ENCODE measurements at regions of chr22 and their contacts with region 1.

Region 1: GRCh38 chr22:22848364-22848866 is 39.2 kb upstream of the IGLL5 start:
- DNase-seq: peak; percentile 85
- ATAC-seq: peak; percentile 92
- H3K4me3 Mint-ChIP-seq: no peak overlapping the region
- H3K27ac Mint-ChIP-seq: no peak overlapping the region
- H3K4me1 Mint-ChIP-seq: peaks cover 34% of the 10 kb centered on the region
- H3K27me3 Mint-ChIP-seq: no peaks in the 10 kb centered on the region

Region 2: GRCh38 chr22:22802339-22802970 is 46.0 kb before region 1 on chr22:
- CTCF ChIA-PET with region 1: interaction called, 16 read pairs
- POLR2A ChIA-PET with region 1: no interaction called
- intact Hi-C with region 1: loop called in 1 of 2 experiments (anchors 1 kb)
- DNase-seq: peak; percentile 70
- ATAC-seq: peak; percentile 68
- H3K4me3 Mint-ChIP-seq: no peak overlapping the region
- H3K27ac Mint-ChIP-seq: no peak overlapping the region
- H3K4me1 Mint-ChIP-seq: peaks cover 38% of the 10 kb centered on the region
- H3K27me3 Mint-ChIP-seq: no peaks in the 10 kb centered on the region

Region 3: DNA sequence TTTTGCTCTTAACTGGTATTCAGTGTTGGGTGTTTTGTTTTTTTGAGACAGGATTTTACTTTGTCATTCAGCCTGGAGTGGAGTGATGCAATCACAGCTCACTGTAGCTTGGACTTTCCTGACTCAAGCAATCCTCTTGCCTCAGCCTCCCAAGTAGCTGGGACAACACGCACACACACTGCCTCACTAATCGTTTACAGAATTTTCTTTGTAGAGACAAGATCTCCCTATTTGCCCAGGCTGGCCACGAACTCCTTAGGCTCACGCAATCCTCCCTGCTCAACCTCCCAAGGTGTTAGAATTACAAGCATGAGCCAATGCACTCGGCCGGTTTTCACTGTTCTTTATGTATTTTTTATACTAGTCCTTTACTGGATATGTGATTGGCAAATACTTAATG is 11.8 kb before region 1 on chr22:
- CTCF ChIA-PET with region 1: interaction called, 26 read pairs
- POLR2A ChIA-PET with region 1: no interaction called
- intact Hi-C with region 1: no loop called
- DNase-seq: no peak
- ATAC-seq: no peak
- H3K4me3 Mint-ChIP-seq: no peak overlapping the region
- H3K27ac Mint-ChIP-seq: no peak overlapping the region
- H3K4me1 Mint-ChIP-seq: peaks cover 10% of the 10 kb centered on the region
- H3K27me3 Mint-ChIP-seq: no peaks in the 10 kb centered on the region

Region 4: DNA sequence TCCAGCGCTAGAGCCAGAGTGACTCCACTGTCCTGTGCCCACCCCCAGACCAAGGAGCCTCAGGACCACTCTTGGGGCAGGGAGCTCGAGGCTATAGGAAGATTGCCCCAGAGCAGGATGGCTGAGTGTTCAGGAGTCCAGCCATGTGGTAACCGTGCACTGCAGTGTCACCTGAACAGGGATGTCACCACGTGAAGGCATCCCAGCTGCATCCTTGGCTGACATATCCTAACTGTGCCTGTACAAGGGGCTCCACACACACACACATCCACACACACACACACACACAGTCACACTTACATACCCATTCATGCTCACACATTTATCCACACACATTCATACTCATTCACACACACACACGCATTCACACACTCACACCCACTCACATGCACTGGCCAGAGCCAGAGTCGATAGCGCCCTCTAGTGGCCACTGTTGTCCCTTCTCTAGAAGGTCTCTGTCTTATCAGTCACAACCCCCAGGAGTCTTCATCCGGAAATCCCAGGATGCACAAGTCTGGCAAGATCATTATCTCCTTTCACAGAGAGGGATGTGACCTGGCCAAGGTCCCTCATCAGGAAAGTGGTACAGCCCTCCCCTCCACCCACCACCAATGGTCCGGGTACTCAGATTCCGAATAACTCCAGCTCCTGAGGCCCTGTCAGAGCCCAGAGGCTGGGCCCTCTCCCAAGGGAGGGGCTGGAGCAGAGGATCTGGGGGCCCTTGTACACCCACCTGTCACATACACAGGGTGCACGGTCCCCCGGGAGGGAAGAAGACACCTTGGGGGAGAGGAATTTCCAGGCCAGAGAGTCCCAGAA is 94.3 kb after region 1 on chr22:
- CTCF ChIA-PET with region 1: interaction called, 5 read pairs
- POLR2A ChIA-PET with region 1: no interaction called
- intact Hi-C with region 1: loop called (anchors 1 to 2 kb)
- DNase-seq: peak; percentile 92
- ATAC-seq: peak; percentile 90
- H3K4me3 Mint-ChIP-seq: no peak overlapping the region
- H3K27ac Mint-ChIP-seq: no peak overlapping the region
- H3K4me1 Mint-ChIP-seq: peaks cover 2% of the 10 kb centered on the region
- H3K27me3 Mint-ChIP-seq: no peaks in the 10 kb centered on the region

Region 5: GRCh38 chr22:23248583-23248982 is 400.2 kb after region 1 on chr22:
- CTCF ChIA-PET with region 1: no interaction called
- POLR2A ChIA-PET with region 1: no interaction called
- intact Hi-C with region 1: no loop called
- DNase-seq: no peak
- ATAC-seq: no peak
- H3K4me3 Mint-ChIP-seq: no peak overlapping the region
- H3K27ac Mint-ChIP-seq: no peak overlapping the region
- H3K4me1 Mint-ChIP-seq: peaks cover 78% of the 10 kb centered on the region
- H3K27me3 Mint-ChIP-seq: no peaks in the 10 kb centered on the region

Measured in activated CD4-positive, alpha-beta T cell treated with anti-CD3 and anti-CD28 coated beads for 36 hours (primary cell).